BJ (cell line): ENCODE measurements at regions of chr1 and their contacts with region 1.

Region 1: DNA sequence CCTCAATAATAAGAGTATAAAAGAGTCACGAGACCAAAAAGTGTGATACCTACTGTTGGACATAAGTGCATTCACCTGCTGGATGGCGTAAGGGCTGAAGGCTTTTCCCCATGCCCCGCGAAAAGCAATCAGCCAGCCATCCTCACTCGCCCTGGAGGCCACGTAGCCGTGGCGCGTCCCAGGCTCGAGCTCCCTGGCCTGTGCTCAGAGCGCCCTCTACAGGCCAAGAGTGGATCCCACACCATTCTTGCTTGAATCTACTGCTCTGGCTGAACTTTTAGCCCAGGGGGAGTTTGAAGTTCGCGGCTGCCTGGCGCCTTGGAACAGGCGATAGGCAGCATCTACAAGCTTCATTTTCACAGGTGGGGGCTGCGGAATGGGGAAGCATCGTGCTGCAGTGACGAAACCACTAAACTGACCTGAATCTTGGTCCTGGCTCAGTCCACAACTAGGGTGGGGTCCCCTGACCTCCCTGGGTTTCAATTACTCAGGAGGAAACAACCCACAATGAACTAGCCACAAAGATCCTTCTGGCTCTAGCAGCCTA is 70.3 kb upstream of the SERBP1 start:
- DNase-seq: peak; percentile 15
- H3K4me3 ChIP-seq: no peak overlapping the region
- H3K27me3 ChIP-seq: peaks cover 7% of the 10 kb centered on the region
- CTCF ChIP-seq: peak; percentile 99

Region 2: DNA sequence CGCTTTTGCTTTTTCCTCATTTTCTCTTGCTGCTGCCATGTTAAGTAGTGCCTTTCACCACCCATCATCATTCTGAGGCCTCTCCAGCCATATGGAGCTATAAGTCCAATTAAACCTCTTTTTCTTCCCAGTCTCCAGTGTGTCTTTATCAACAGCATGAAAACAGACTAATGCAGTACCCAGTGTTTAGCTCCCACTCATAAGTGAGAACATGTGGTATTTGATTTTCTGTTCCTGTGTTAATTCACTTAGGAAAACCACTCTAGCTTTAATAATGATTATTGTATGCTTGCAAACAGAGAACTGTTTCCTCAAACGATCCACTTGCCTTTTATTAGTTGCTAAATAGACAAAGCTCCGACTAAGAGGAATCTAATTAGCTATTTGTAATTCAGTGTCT is 291.0 kb before region 1 on chr1:
- CTCF ChIA-PET with region 1: interaction called, 69 read pairs
- POLR2A ChIA-PET with region 1: no interaction called
- DNase-seq: no peak
- H3K4me3 ChIP-seq: no peak overlapping the region
- H3K27me3 ChIP-seq: no peaks in the 10 kb centered on the region; the same call in 1 of the 2 replicates
- CTCF ChIP-seq: no peak

Region 3: GRCh38 chr1:67332653-67333529 is 167.6 kb before region 1 on chr1:
- CTCF ChIA-PET with region 1: interaction called, 10 read pairs
- POLR2A ChIA-PET with region 1: no interaction called
- DNase-seq: no peak
- H3K4me3 ChIP-seq: no peak overlapping the region
- H3K27me3 ChIP-seq: 0 out of 2 replicates have a peak, but pooled peaks cover 1% of the 10 kb centered on the region
- CTCF ChIP-seq: no peak

Region 4: GRCh38 chr1:67355745-67356424 is 144.6 kb before region 1 on chr1:
- CTCF ChIA-PET with region 1: interaction called, 173 read pairs
- POLR2A ChIA-PET with region 1: no interaction called
- DNase-seq: peak; percentile 83
- H3K4me3 ChIP-seq: no peak overlapping the region
- H3K27me3 ChIP-seq: no peaks in the 10 kb centered on the region
- CTCF ChIP-seq: no peak

Region 5: DNA sequence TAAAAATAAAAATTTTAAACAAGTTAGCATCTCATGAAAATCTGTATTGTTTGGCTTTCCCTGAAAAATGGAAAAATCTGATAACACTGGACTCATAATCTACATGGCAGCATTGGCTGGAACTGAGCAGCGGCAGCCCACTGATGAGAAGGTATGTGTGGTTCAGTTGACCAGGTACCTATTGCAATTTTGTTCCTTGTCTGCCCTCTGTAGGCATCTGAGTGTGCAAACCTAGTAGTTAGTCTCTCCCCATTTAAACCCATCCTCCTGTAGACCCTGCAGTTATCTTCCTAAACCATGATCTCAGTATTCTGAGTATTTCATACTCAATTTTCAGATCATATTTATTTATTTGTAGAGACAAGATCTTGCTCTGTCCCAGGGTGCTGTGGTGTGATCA is 10.8 kb before region 1 on chr1:
- CTCF ChIA-PET with region 1: interaction called, 45 read pairs
- POLR2A ChIA-PET with region 1: no interaction called
- DNase-seq: no peak
- H3K4me3 ChIP-seq: no peak overlapping the region
- H3K27me3 ChIP-seq: peaks cover 3% of the 10 kb centered on the region; the same call in 1 of the 2 replicates
- CTCF ChIP-seq: peak; percentile 16; the same call in 1 of the 2 replicates